ENCODE measurements at regions of chr10 and their contacts with region 1.

Region 1: GRCh38 chr10:58177362-58177947 is 90.2 kb downstream of the IPMK start:
- DNase-seq: no peak
- H3K4me3 ChIP-seq: no peak overlapping the region
- CTCF ChIP-seq: peak; percentile 22

Region 2: GRCh38 chr10:58030208-58030607 is 147.2 kb before region 1 on chr10:
- CTCF ChIA-PET with region 1: no interaction called
- POLR2A ChIA-PET with region 1: no interaction called
- DNase-seq: no peak
- H3K4me3 ChIP-seq: no peak overlapping the region
- CTCF ChIP-seq: no peak

Region 3: DNA sequence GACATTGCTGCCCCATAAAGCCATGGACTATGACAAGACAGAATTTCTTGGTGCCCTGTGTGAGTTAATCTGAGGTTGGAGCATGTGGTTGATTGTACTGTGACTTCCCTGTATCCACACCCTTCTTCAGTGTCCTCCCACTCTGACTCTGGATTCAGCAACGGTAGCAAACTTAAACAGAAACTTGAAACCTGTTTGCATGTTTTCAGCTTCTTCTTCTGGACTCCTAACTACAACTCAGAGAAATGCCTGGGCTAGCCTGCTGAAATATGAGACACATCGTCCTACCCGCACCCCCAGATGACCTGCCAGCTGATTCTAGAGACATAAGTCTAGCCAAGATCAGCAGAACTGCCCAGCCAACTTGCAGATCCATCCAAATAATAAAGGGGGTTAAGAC is 11.8 kb after region 1 on chr10:
- CTCF ChIA-PET with region 1: interaction called, 16 read pairs
- POLR2A ChIA-PET with region 1: no interaction called
- DNase-seq: peak; percentile 21
- H3K4me3 ChIP-seq: no peak overlapping the region
- CTCF ChIP-seq: no peak

Region 4: DNA sequence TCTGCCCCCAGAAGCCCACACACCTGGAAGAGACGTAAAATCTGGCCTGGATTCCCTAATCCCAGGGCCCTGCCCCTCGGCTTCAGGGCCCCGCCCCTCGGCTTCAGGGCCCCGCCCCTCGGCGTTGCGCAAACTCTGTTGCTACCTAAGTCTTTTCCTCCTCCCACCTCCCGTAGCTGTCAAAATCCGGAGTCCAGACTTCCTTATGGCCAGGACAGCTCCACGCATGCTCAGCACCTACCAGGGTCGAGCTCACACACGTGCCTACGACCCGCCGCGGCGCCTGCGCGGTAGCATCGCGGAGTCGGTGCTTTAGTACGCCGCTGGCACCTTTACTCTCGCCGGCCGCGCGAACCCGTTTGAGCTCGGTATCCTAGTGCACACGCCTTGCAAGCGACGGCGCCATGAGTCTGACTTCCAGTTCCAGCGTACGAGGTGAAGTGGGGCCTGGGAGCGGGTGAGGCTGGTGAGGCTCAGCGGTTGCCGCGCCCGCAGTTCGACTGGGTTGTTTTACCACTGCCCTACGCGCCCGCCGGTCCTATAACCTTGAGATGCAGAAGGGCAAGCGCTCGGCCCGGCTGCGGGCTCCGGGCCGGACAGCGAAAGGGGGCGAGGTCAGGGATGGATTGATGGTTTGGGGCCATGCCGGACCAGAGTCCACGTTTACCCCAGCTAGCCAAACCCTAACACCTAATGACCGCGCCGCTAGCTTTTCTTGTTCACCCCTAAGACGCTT is 91.6 kb after region 1 on chr10 and contains the start of gene CISD1:
- CTCF ChIA-PET with region 1: interaction called, 10 read pairs
- POLR2A ChIA-PET with region 1: no interaction called
- DNase-seq: peak; percentile 98
- H3K4me3 ChIP-seq: peak within 1 kb of the TSS; percentile 87
- CTCF ChIP-seq: no peak

Region 5: DNA sequence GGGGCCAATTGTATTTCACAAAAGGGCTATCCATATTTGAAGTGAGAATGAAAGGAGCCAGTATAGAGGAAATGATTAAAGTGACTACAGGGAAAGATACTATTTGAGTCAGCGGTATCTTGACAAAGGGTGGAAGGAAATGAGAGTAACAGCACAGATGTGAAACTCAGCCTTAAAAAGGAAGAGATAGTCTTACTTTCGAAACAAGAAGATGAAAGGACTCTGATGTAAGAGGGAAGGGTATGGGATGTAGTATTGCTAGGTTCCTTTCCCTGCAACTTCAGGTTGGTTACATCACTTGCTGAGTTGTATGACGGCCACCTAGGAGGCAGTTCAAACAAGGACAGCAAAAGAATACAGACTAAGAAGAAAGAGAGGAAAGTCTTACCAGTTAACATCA is 105.2 kb after region 1 on chr10:
- CTCF ChIA-PET with region 1: interaction called, 22 read pairs
- POLR2A ChIA-PET with region 1: no interaction called
- DNase-seq: no peak
- H3K4me3 ChIP-seq: no peak overlapping the region
- CTCF ChIP-seq: no peak

Region 6: DNA sequence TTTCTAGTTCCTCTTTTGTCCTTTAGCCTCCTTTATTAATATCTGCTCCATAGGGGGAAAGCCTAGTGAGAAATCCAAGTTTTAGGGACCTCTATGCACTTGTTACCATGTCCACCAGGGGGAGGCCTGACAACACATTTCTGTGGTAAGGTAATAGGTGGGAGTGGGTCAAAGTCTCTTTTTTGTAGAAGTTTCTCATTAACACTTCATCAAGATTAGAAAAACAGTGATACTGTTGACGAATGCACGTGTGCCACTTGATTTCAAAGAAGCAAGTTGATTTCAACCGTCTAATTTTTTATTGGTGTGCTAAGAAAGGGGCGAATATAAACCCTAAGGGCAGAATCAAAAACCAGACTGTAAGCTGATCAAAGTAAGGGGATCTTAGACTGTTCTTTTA is 122.1 kb after region 1 on chr10:
- CTCF ChIA-PET with region 1: interaction called, 328 read pairs
- POLR2A ChIA-PET with region 1: no interaction called
- DNase-seq: no peak
- H3K4me3 ChIP-seq: no peak overlapping the region
- CTCF ChIP-seq: peak; percentile 80

Region 7: DNA sequence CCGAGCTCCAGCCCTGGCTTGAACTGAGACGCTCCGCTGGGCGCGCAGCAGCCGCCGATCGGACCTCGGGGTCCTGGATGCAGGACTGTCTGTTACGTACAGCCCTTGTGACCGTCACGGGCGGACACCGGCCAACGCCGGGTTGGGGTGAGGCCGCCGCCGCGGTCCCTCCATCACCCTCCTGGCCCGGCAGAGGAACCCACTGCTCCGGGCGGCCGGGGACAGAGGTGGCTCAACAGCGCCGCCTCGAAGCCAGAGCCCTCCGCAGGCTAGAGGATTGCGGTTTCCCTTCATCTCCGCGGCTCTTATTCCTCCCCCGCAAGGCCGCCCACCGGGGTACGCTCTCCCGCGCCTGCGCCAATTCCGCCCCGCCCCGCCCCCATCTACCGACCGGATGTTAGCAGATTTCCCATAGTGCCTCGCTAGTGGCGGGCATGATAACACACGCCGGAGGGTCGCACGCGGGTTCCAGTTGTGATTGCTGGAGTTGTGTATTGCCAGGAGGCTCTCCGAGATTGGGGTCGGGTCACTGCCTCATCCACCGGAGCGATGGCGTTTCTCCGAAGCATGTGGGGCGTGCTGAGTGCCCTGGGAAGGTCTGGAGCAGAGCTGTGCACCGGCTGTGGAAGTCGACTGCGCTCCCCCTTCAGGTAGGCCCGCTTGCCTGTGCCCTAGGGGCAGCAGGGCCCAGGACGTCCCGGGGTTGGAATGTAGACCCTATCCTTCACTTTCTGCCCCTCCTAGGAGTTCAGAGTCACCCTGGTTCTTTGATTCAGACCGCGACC is 207.7 kb after region 1 on chr10 and contains the start of gene TFAM:
- CTCF ChIA-PET with region 1: interaction called, 26 read pairs
- POLR2A ChIA-PET with region 1: no interaction called
- DNase-seq: peak; percentile 67
- H3K4me3 ChIP-seq: peak within 1 kb of the TSS; percentile 94
- CTCF ChIP-seq: peak; percentile 80

Measured in AG04449 (cell line).